ENCODE measurements at regions of chr6 and their contacts with region 1.

Region 1: DNA sequence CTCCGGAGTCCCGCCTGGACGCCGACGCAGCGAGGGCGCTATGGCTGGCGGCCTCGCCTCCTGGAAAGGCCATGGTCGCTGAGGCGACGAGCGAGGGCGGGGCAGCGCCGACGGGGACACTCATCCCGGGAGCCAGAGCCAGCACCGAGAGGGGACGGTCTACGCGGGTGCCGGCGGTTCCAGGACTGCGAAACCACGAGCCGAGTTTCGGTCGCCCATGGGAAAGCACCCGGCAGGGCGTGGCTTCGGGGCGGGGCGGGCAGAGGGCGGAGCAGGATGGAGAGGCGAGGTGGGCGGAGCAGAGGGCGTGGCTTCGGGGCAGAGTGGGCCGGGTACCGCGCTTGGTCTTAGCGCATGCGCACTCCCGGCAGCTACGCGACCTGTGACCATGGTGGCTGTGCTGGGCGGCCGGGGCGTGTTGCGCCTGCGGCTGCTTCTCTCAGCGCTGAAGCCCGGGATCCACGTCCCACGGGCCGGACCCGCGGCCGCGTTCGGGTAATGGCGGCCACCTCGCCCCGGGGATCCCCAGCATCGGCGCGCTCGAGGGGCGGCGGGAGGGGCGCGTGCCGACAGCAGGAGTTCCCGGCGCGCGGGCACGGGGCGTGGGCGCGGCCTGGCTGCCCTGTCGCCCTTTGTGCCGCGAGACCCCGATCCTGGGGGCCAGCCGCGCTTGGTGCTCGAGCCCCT is at the start of gene BPHL:
- DNase-seq: peak; percentile 95
- ATAC-seq: peak; percentile 90
- H3K4me3 ChIP-seq: peak within 1 kb of the TSS; percentile 88
- H3K27ac ChIP-seq: peak within 1 kb of the TSS; percentile 91
- H3K4me1 ChIP-seq: peaks cover 29% of the 10 kb centered on the region
- H3K27me3 ChIP-seq: no peaks in the 10 kb centered on the region
- CTCF ChIP-seq: no peak
- total RNA-seq, gene BPHL: 15.7 and 15.8 TPM in 2 replicates

Region 2: DNA sequence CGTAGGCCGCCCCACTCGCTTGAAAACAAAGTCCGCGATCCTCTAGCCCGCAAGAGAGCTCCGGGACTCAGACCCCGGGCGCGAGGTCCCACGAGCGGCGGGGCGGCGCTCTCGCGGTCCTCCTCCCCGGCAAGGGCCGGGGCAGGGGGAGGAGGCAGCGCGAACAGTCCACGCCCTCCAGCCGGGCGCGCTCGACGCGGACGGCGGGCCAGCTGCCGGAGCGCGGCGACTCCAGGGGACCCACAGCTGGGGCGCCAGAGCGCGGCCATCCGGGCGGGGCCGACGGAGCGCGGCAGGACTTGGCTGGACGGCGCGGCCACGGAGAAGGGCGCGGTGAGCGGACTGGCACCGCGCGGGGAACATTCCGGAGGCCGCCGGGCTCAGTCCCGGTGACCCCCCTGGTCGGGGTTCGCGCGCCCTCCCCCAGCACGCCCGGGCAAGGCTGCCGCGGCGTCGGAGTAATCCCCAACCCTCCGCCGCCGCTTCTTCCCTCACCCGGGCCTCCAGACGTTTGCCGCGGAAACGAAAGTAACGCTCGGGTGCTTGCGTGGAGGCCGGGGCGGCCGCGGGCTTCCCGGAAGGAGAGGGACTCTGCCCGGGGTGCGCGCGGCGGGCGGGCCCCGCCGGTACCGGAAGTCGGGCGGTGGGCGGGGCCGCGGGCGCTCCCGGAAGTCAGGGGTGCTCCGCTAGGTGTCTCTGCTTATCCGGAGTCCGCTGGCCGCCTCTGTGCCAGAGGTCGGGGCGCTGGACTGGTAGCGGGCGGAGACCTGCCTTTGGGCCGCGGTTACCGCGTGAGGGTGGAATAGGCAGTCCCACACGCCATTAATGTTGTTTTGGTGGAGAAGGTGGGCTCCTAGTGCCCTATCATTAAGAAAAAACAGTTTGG is 49.9 kb before region 1 on chr6 and contains the start of gene RIPK1:
- CTCF ChIA-PET with region 1: interaction called, 3 read pairs
- POLR2A ChIA-PET with region 1: no interaction called
- intact Hi-C with region 1: loop called (anchors 2 kb)
- DNase-seq: peak; percentile 94
- ATAC-seq: peak; percentile 73
- H3K4me3 ChIP-seq: peak within 1 kb of the TSS; percentile 91
- H3K27ac ChIP-seq: peak within 1 kb of the TSS; percentile 88
- H3K4me1 ChIP-seq: peaks cover 16% of the 10 kb centered on the region; the same call in 1 of the 2 replicates
- H3K27me3 ChIP-seq: no peaks in the 10 kb centered on the region
- CTCF ChIP-seq: peak; percentile 43; the same call in 1 of the 2 replicates
- total RNA-seq, gene RIPK1: 14.5 and 17.7 TPM in 2 replicates